Posterior cingulate gyrus (tissue), 11 donors: ENCODE measurements at regions of chr1 and their contacts with region 1.

Region 1: DNA sequence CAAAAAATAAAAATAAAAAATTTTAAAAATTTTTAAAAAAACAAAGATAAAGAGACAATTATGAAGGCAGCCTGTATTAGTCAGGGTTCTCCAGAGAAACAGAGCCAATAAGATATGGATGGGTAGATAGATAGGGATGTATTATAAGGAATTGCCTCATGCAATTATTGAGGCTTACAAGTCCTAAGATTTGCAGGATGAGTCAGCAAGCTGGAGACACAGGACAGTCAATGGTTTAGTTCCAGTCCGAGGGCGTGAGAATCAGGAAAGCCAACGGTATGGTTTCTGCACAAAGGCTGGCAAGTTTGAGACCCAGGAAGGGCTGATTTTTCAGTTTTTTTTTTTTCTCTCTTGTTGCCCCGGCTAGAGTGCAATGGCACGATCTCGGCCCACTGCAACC is 24.1 kb upstream of the EIF4G3 start:
- DNase-seq: peak in 1 of 10 donors; percentile 5

Region 2: DNA sequence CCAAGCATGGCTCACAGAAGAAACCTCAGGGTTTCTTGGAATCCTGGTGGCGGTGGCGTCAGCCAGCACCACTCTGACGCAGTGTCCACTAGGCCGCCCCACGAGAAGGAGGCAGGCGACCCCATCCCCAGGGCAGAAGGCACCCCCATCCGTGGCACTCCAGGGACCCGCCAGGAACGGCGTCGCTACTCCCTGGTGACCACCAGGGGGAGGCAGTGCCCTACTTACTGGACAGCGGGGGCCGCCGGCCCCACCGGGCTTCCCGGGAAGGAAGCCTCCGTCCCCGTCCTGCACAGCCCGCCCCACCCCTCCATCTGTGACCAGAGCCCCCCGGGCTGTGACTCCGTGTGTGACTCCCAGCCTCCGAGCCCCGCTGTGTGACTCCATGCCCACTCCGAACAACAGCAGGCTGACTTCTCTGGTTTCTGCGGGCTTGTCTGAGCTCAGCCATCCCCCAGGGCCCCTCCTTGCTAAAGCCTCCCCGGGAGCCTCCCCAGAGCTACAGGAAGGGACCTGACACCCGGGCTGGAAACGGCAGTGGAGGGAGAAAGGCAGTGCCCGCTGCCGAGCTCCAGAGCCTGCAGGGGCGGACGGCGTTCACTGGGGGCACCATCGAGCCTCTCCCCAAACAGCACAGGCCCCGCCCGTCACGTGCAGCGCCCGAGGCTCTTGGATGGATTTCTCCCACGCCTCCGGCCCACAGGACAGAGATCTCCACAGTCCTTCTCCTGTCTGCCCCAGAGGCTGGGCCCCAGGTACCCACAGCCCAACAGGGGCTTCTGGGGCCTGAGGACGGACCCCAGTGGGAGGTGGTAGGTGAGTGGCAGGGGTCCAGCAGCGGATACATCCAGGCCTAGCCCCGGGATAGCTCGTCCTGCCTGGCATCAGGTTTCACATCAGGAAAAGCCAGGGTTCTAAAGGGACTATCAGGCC is 504.1 kb before region 1 on chr1:
- intact Hi-C with region 1: loop called (anchors 1 kb)
- DNase-seq: peak; percentile 71 to 97 (median 84)

Region 3: GRCh38 chr1:20981915-20982314 is 218.9 kb before region 1 on chr1:
- intact Hi-C with region 1: loop called (anchors 2 kb)
- DNase-seq: no peak

Region 4: DNA sequence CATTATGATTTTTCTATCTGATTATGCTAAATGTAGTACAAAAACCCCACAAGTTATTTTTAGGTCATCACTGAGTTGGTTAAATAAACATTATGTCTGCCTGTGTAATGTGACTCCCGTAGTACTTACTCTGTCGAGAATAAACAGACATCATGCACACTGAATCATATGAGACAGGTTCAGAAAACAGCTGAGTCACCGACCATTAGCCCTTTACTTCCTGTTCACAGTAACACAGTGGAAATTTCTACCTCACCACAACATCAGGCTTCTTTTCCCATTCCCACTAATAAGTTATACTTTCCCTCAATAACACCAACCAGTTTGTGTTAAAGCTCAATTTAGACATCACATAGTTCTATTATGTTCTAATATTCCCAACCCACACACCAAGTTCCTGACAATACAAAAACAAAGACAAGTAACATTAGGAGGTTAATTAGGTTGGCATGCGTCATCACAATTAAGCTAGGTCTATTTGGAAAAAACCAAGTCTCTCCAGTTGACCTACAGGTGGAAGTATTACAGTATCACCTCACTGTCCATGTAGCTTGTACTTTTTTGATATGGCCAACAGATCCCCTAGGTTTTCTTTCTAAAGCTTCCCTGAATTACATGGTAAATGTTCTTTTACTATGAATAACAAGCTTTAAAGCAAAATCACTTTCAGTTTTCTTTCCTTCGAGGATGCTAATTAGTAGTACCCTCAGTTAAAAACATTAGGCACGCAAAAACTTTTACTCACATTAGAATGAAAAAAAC is 178.3 kb before region 1 on chr1:
- intact Hi-C with region 1: no loop called
- DNase-seq: no peak

Region 5: DNA sequence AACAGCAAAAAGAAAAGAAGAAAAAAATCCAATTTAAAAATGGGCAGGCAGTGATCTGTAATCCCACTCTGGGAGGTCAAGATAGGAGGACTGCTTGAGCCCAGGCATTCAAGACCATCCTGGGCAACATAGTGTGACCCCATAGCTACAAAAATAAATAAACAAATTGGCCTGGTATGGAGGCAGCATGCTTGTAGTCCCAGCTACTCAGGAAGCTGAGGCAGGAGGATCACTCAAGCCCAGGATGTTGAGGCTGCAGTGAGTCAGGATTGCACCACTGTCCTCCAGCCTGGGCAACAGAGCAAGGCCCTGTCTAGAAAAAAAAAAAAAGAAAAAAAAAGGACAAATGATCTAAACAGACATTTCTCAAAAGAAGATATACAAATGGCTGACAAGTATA is 123.7 kb before region 1 on chr1:
- intact Hi-C with region 1: loop called (anchors 5 kb)
- DNase-seq: no peak

Region 6: DNA sequence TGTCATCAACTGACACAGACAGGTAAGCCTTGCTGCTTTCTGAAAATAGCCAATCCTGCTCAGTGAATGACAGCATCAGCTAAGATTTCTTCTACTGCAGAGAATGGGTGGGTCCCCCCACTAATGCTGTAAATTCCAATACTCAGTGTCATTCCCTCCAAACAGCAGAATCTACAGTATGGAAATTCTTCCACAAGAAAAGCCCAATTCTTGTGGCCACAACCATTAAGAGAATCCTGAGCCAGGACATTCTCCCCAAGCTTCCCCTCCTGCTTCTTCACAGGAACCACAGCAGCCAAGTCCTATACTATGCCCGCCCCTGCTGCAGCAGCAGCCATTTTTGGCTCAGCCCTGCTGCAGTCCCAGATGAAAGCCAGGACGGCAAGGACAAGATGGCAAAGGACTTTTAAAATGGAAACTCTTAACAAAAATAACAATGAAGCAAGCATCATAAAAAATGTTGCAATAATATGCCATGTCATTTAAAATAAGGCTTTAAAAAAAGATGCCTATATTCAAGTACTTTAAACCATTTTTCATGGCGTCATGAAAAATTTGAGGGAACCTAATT is 50.8 kb before region 1 on chr1:
- intact Hi-C with region 1: no loop called
- DNase-seq: peak in 8 of 10 donors; percentile 23 to 95 (median 44)

Region 7: DNA sequence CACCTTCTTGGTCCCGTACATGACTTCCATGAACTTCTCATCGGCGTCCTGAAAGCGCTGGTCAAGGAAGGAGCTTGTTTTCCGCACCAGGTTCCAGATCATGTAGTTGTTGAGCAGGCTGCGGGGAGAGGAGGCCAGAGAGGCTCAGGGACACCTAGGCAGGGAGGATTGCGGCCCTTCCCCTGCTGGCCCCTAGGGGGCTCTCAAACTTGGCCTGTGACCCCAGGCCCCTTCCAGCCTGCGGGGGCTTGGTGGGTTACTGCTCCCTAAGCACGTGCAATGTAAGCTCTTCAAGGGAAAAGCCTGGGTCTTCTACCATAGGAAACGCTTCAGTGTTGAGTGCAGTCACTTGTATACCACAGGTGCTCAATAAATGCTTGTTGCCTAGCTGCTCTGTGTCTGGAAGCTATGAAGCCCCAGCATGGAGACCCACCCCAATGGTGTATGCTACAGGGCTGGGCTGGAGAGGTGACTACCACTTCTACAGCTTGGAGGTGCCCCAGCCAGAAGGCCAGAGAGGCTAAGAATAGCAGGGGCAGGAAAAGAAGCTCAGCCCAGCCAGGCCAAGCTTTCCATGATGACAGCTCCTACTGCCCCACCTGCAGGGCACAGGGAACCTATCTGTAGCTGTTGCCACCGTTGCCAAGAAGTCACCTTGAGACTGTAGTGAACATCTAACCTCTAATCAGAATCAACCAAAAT is 44.4 kb after region 1 on chr1:
- intact Hi-C with region 1: no loop called
- DNase-seq: no peak